OCI-LY7 (cell line): ENCODE measurements at regions of chr22 and their contacts with region 1.

Region 1: GRCh38 chr22:22207845-22208564 is 36.6 kb upstream of the VPREB1 start:
- DNase-seq: peak; percentile 98
- H3K4me3 ChIP-seq: peak overlapping the region; percentile 50
- H3K27ac ChIP-seq: peak overlapping the region; percentile 81
- H3K4me1 ChIP-seq: peaks cover 65% of the 10 kb centered on the region
- CTCF ChIP-seq: peak; percentile 97

Region 2: GRCh38 chr22:22110548-22111266 is 97.3 kb before region 1 on chr22:
- CTCF ChIA-PET with region 1: interaction called, 8 read pairs
- POLR2A ChIA-PET with region 1: interaction called, 5 read pairs
- intact Hi-C with region 1: loop called (anchors 5 kb)
- DNase-seq: peak; percentile 95
- H3K4me3 ChIP-seq: peak overlapping the region; percentile 38
- H3K27ac ChIP-seq: peak overlapping the region; percentile 64
- H3K4me1 ChIP-seq: peaks cover 34% of the 10 kb centered on the region
- CTCF ChIP-seq: peak; percentile 89

Region 3: DNA sequence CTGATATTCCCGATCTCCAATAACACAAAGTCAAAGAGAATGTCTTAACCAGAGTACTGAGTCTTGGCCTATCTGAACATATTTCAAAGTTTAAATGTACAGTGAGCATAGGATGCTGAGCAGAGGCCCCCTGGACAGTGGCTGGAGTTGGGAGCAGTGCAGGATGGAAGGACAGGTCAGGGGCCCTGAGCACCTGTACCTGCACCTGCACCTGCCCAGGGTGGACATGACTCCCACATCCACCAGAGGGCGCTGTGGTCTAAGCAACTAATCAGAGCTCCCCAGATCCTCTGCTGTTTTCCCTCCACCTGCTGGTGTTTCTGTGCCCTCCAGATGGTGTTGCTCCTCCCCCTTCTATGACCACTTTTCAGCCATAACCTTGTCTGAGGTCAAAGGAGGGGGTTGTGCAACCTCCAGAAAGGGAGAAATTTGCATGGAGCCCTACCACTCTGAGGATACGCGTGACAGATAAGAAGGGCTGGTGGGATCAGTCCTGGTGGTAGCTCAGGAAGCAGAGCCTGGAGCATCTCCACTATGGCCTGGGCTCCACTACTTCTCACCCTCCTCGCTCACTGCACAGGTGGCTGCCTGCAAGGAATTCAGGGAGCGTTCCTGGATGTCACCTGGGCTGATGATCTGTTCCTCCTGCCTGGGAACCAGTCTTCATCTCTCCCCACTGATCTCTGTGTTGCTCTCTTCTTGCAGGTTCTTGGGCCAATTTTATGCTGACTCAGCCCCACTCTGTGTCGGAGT is 12.6 kb before region 1 on chr22:
- CTCF ChIA-PET with region 1: no interaction called
- POLR2A ChIA-PET with region 1: interaction called, 19 read pairs
- intact Hi-C with region 1: loop called (anchors 1 kb)
- DNase-seq: peak; percentile 99
- H3K4me3 ChIP-seq: peak overlapping the region; percentile 79
- H3K27ac ChIP-seq: peak overlapping the region; percentile 95
- H3K4me1 ChIP-seq: peaks cover 57% of the 10 kb centered on the region
- CTCF ChIP-seq: peak; percentile 99

Region 4: DNA sequence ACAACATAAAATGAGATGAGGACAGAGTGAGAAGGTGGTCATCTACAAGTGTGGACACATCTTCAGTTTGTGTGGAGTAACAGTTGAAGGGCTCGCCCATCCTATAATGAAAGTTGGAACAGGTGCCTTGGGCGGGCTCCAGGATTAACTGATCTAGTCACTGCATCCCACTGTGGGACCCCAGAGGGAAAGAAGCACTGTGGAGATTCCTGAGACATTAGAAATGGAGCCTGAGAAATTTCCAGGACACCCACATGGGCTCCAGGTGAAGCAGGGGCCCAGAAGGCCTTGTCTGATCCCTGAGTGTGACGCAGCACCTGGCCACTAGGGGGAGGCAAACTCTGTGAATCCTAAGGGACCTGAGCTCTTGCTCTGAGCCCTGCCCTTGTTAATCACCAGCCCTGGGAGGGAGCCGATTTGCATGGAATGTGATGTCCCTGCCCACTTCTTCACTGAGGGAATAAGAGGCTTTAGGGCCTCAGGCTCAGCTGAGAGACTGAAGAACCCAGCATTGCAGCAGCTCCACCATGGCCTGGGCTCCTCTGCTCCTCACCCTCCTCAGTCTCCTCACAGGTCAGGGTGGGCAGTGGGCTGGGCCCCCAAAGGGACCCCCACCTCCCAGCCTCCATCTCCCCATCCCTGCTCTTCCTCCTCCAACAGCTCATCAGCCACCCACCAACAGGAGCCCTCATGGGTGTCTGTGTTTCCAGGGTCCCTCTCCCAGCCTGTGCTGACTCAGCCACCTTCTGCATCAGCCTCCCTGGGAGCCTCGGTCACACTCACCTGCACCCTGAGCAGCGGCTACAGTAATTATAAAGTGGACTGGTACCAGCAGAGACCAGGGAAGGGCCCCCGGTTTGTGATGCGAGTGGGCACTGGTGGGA is 134.9 kb after region 1 on chr22:
- CTCF ChIA-PET with region 1: no interaction called
- POLR2A ChIA-PET with region 1: no interaction called
- intact Hi-C with region 1: loop called (anchors 2 kb)
- DNase-seq: peak; percentile 83
- H3K4me3 ChIP-seq: no peak overlapping the region
- H3K27ac ChIP-seq: peak overlapping the region; percentile 26
- H3K4me1 ChIP-seq: peaks cover 25% of the 10 kb centered on the region
- CTCF ChIP-seq: peak; percentile 94

Region 5: GRCh38 chr22:22463855-22464540 is 256.0 kb after region 1 on chr22:
- CTCF ChIA-PET with region 1: interaction called, 3 read pairs
- POLR2A ChIA-PET with region 1: no interaction called
- intact Hi-C with region 1: loop called (anchors 1 kb)
- DNase-seq: peak; percentile 84
- H3K4me3 ChIP-seq: peak overlapping the region; percentile 27
- H3K27ac ChIP-seq: no peak overlapping the region
- H3K4me1 ChIP-seq: peaks cover 20% of the 10 kb centered on the region
- CTCF ChIP-seq: peak; percentile 94

Region 6: DNA sequence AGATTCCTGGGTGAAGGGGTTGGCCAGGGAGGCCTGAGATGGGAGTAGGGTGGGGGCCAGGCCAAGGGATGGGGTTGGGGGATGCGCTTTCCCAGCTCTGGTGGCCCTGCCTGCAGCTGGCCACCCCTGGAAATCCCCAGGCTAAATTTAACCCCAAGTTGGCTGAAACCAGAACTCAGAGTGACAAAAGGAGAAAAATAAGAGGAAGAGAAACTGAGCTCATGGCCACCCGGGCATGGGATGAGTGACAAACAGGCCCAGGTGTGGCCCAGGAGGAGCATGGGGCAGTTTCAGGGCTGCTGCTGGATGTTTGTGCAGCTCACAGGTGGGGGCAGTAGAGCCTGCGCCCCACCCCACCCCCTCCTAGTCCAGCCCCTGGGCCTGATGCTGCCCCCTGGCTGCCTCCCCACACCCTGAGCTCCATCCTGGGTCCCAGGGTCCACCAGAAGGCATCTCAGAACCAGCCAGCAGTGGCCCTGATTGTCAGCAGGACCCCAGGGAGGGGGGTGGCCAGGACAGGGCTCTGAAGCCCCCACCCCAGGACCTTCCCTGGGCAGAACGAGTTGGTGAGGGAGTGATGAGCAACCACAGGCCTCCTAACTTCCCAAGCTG is 727.6 kb after region 1 on chr22:
- CTCF ChIA-PET with region 1: no interaction called
- POLR2A ChIA-PET with region 1: no interaction called
- intact Hi-C with region 1: loop called (anchors 10 kb)
- DNase-seq: peak; percentile 99
- H3K4me3 ChIP-seq: peak overlapping the region; percentile 14
- H3K27ac ChIP-seq: peak overlapping the region; percentile 91
- H3K4me1 ChIP-seq: peaks cover 98% of the 10 kb centered on the region
- CTCF ChIP-seq: peak; percentile 82